ENCODE measurements at regions of chr2 and their contacts with region 1.

Region 1: GRCh38 chr2:240434728-240435456 is 571 bp upstream of the GPC1 start:
- ATAC-seq: peak; percentile 58 to 79 (median 73)
- H3K4me3 ChIP-seq: peak overlapping the region; percentile 63 to 88 (median 72)
- H3K27ac ChIP-seq: peak overlapping the region; percentile 48 to 69
- H3K4me1 ChIP-seq: peaks cover 17 to 22% of the 10 kb centered on the region in 2 donors

Region 2: GRCh38 chr2:240032406-240033329 is 402.2 kb before region 1 on chr2:
- in situ Hi-C with region 1: no loop called
- ATAC-seq: peak in 1 of 8 experiments; percentile 32
- H3K4me3 ChIP-seq: no peak overlapping the region
- H3K27ac ChIP-seq: no peak overlapping the region
- H3K4me1 ChIP-seq: no peaks in the 10 kb centered on the region

Region 3: DNA sequence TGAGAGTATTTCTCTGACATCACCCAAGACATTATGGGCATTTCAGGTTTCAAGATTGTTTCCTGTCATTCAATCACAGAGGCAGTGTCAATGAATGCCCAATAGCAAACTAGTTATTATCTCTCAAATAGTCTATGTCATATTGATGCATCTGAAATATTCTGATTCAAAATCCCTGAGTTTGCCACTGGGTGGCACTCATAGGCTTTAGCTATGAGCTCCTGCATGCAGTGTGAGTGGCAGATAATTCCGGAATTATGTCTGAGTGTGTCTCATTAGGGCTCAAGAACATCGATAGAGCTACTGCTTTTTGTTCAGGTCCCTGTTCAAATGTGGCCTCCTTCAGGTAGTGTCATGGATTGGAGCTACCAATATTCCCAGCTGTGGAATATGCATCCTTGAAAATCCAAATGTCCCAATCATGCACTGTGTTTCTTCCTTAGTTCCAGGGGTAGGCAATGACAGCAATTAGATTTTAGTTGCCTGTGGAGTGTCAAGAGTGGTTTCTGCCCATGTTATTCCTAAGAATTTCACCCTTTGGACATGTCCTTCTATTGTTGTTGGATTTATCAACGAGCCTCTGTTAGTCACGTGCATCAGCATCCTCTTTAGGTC is 373.8 kb before region 1 on chr2:
- in situ Hi-C with region 1: loop called in 3 of 9 experiments (anchors 25 kb)
- ATAC-seq: peak; percentile 53 to 97 (median 82)
- H3K4me3 ChIP-seq: no peak overlapping the region
- H3K27ac ChIP-seq: no peak overlapping the region
- H3K4me1 ChIP-seq: no peaks in the 10 kb centered on the region

Region 4: GRCh38 chr2:240149943-240150784 is 284.7 kb before region 1 on chr2:
- in situ Hi-C with region 1: loop called in 3 of 9 experiments (anchors 25 kb)
- ATAC-seq: peak; percentile 50 to 84 (median 66)
- H3K4me3 ChIP-seq: no peak overlapping the region
- H3K27ac ChIP-seq: no peak overlapping the region
- H3K4me1 ChIP-seq: peaks cover under 1 to 6% of the 10 kb centered on the region in 2 donors

Region 5: GRCh38 chr2:240225660-240226475 is 209.0 kb before region 1 on chr2:
- in situ Hi-C with region 1: loop called in 7 of 9 experiments (anchors 5 to 25 kb)
- ATAC-seq: no peak
- H3K4me3 ChIP-seq: no peak overlapping the region
- H3K27ac ChIP-seq: no peak overlapping the region
- H3K4me1 ChIP-seq: no peaks in the 10 kb centered on the region

Region 6: DNA sequence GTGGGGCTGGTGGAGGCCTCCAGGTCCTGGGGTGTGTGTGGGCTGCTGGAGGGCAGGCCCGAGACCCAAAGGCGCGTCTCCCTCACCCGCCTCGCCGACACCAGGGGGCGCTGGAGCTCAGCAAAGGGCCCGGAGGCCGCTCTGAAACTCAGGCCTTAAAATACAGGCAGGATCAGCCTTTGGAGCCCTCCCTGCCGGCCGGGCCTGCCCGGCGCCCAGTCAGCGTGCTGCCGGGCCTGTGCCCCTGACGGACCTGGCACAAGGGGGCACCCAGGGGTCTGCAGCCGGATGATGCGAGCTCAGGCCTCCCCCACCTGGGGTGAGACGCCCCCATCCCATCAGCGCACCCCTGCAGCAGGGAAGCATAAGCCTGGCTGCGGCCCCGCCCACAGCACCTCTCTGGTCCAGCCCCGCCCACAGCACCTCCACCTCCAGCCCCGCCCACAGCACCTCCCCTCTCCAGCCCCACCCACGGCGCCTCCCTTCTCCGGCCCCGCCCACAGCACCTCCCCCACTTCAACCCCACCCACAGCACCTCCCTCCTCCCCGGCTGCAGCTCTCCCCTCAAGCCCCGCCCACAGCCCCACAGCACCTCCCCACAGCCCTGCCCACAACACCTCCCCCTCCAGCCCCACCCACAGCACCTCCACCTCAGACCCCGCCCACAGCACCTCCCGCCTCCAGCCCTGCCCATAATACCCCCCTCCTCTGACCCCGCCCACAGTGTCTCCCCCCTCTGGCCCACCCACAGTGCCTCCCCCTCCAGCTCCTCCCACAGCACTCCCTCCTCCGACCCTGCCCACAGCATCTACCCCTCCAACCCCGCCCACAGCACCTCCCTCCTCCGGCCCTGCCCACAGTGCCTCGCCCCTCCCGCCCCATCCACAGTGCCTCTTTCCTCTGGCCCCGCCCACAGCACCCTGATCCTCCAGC is 201.7 kb before region 1 on chr2:
- in situ Hi-C with region 1: loop called in 7 of 9 experiments (anchors 5 to 25 kb)
- ATAC-seq: peak; percentile 58 to 86 (median 71)
- H3K4me3 ChIP-seq: peak overlapping the region in 3 of 5 donors; percentile 12 to 19 (median 13)
- H3K27ac ChIP-seq: no peak overlapping the region
- H3K4me1 ChIP-seq: peaks cover 13 to 25% of the 10 kb centered on the region in 2 donors

Measured in motor neuron (in vitro differentiated cells).